Activated CD4-positive, alpha-beta T cell treated with anti-CD3 and anti-CD28 coated beads for 36 hours (primary cell): ENCODE measurements at regions of chr3 and their contacts with region 1.

Region 1: DNA sequence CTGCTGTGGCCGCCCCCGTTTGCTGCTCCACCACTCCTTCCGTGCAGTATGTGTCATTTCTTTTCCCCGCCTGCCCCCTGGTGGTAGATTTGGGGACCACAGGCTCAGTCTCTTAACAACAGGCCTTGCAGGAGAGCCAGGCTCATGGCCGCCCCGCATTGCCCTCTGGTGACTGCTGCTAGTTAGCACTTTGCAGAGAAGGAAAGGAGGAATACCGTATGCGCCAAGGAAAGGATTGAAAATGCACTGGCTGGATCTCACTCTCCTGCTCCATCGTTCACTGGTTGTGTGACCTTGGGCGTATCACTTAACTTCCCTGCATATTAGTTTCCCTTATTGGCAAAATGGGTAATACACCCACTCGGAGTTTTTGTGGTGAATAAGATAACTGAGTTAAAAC is 39.3 kb upstream of the PXYLP1 start:
- DNase-seq: peak; percentile 98
- ATAC-seq: peak; percentile 100
- H3K4me3 Mint-ChIP-seq: no peak overlapping the region
- H3K27ac Mint-ChIP-seq: no peak overlapping the region
- H3K4me1 Mint-ChIP-seq: peaks cover 13% of the 10 kb centered on the region
- H3K27me3 Mint-ChIP-seq: peaks cover 2% of the 10 kb centered on the region

Region 2: DNA sequence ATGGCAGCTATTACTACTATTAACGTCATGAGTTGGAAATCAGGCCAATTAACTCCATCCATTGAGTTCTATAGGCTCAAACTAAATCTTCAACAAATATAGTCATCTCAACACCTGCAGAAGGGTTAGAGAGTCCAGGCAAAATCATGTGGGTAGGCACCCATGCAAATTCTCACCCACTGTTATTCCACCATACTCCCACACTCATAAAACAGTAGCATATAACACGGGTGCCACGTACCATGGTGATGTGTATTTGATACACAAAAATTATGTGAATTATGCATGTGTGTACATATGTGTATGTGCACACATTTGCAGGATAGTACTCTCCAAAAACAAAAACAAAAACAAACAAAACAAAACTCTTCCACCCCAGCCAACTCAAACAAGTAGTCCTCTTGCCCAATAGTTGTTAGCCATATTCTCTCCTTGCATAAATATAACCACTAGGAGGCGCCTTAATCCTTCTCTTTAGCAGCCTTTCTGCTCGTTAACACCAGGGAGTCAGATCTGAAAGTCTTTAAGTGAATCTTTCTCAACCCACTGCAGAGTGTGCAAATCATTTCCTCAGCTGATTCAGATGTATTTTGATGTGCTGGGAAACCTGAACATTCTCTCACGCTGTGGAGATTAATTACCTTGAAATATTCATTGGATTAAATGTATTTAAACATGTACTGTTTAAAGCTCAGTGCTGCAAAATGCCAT is 1764.9 kb before region 1 on chr3:
- CTCF ChIA-PET with region 1: no interaction called
- POLR2A ChIA-PET with region 1: no interaction called
- intact Hi-C with region 1: loop called in 1 of 2 experiments (anchors 5 kb)
- DNase-seq: no peak
- ATAC-seq: peak; percentile 78
- H3K4me3 Mint-ChIP-seq: no peak overlapping the region
- H3K27ac Mint-ChIP-seq: no peak overlapping the region
- H3K4me1 Mint-ChIP-seq: no peaks in the 10 kb centered on the region
- H3K27me3 Mint-ChIP-seq: no peaks in the 10 kb centered on the region

Region 3: GRCh38 chr3:140922634-140923033 is 269.7 kb before region 1 on chr3:
- CTCF ChIA-PET with region 1: no interaction called
- POLR2A ChIA-PET with region 1: no interaction called
- intact Hi-C with region 1: loop called in 1 of 2 experiments (anchors 1 kb)
- DNase-seq: no peak
- ATAC-seq: peak; percentile 60
- H3K4me3 Mint-ChIP-seq: no peak overlapping the region
- H3K27ac Mint-ChIP-seq: no peak overlapping the region
- H3K4me1 Mint-ChIP-seq: no peaks in the 10 kb centered on the region
- H3K27me3 Mint-ChIP-seq: peaks cover 7% of the 10 kb centered on the region

Region 4: DNA sequence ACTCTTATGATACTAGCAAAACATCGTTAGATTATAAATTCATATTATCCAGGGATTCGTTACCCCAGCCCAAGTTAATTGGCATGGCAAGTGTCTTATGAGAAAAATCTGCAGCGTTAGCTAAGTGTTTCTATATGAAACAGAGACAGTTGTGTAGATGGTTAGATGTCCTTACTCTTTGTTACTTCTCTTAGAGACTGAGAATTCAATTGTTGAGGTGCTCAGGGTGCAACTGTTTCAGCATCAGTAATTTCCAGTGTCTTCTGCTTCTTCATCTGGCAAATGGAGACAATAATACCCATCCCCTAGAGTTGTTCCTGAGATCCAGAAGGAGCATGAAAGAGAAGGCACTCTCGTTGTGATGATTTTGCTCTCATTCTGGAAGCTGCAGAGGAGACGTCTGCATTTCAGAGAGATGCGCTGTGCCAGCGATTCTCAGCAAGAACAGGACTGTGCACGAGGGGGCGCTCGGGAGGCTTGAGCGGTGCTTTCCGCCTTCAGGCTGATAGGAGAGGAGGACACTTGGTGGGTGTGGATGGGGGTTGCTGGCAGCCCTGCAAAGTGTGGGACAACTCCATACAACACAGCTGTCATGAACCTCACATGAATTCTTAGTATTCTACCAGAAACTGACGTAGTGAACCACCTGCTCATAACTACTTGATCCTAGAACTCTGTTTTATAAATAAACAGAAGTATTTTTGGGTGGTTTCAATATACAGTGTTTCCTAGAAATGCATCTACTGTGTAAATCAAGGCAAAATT is 180.9 kb before region 1 on chr3:
- CTCF ChIA-PET with region 1: interaction called, 12 read pairs
- POLR2A ChIA-PET with region 1: no interaction called
- intact Hi-C with region 1: loop called (anchors 1 kb)
- DNase-seq: peak; percentile 93
- ATAC-seq: peak; percentile 98
- H3K4me3 Mint-ChIP-seq: no peak overlapping the region
- H3K27ac Mint-ChIP-seq: no peak overlapping the region
- H3K4me1 Mint-ChIP-seq: peaks cover 3% of the 10 kb centered on the region
- H3K27me3 Mint-ChIP-seq: peaks cover 12% of the 10 kb centered on the region

Region 5: GRCh38 chr3:141255846-141256261 is 63.5 kb after region 1 on chr3:
- CTCF ChIA-PET with region 1: interaction called, 3 read pairs
- POLR2A ChIA-PET with region 1: no interaction called
- intact Hi-C with region 1: loop called in 1 of 2 experiments (anchors 2 kb)
- DNase-seq: peak; percentile 72
- ATAC-seq: peak; percentile 92
- H3K4me3 Mint-ChIP-seq: no peak overlapping the region
- H3K27ac Mint-ChIP-seq: peak overlapping the region; percentile 38
- H3K4me1 Mint-ChIP-seq: peaks cover 52% of the 10 kb centered on the region
- H3K27me3 Mint-ChIP-seq: no peaks in the 10 kb centered on the region

Region 6: DNA sequence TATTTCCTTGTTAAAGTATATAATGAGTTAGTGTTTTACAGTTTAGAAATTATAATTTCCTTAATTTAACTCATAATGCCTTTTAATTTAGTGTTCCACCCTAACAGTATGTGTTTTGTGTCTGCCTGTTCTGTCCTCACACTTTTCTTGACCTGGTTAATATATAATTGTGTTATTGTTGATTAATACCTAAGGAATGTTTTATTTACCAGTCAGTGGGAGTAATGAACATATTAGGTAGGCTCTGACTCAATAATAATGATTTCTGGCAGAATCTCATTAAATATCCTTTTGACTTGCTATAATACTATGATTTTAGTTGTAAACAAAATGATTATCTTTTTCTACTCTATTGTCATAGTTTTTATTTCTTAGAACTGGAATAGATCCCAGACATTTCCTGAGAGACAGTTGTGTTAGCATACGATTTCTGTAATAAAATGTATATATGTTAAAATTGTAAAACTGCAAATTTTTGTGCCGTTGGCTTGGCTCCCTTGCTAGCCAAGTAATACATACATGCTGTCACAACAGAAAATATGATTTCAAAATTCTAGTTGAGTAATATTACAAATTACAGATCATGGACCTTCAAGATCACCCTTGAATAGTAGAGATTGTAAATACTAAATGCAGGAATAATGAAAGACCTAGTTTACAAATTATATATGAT is 346.4 kb after region 1 on chr3:
- CTCF ChIA-PET with region 1: no interaction called
- POLR2A ChIA-PET with region 1: no interaction called
- intact Hi-C with region 1: no loop called
- DNase-seq: no peak
- ATAC-seq: no peak
- H3K4me3 Mint-ChIP-seq: no peak overlapping the region
- H3K27ac Mint-ChIP-seq: no peak overlapping the region
- H3K4me1 Mint-ChIP-seq: peaks cover 60% of the 10 kb centered on the region
- H3K27me3 Mint-ChIP-seq: no peaks in the 10 kb centered on the region